ENCODE measurements at regions of chr19 and their contacts with region 1.

Region 1: GRCh38 chr19:56660381-56661107 is 11.0 kb downstream of the ZNF835 start:
- DNase-seq: no peak
- ATAC-seq: no peak
- H3K4me3 ChIP-seq: no peak overlapping the region
- H3K4me3 Mint-ChIP-seq: no peak overlapping the region
- H3K27ac ChIP-seq: no peak overlapping the region
- H3K27ac Mint-ChIP-seq: no peak overlapping the region
- H3K4me1 ChIP-seq: no peaks in the 10 kb centered on the region
- H3K4me1 Mint-ChIP-seq: no peaks in the 10 kb centered on the region
- H3K27me3 ChIP-seq: no peaks in the 10 kb centered on the region
- H3K27me3 Mint-ChIP-seq: no peaks in the 10 kb centered on the region
- CTCF ChIP-seq: no peak

Region 2: GRCh38 chr19:56547535-56547934 is 113.0 kb before region 1 on chr19:
- CTCF ChIA-PET with region 1: no interaction called
- POLR2A ChIA-PET with region 1: no interaction called
- intact Hi-C with region 1: loop called in 1 of 2 experiments (anchors 5 kb)
- DNase-seq: no peak
- ATAC-seq: no peak
- H3K4me3 ChIP-seq: no peak overlapping the region
- H3K4me3 Mint-ChIP-seq: no peak overlapping the region
- H3K27ac ChIP-seq: no peak overlapping the region
- H3K27ac Mint-ChIP-seq: no peak overlapping the region
- H3K4me1 ChIP-seq: no peaks in the 10 kb centered on the region
- H3K4me1 Mint-ChIP-seq: no peaks in the 10 kb centered on the region
- H3K27me3 ChIP-seq: no peaks in the 10 kb centered on the region
- H3K27me3 Mint-ChIP-seq: no peaks in the 10 kb centered on the region
- CTCF ChIP-seq: no peak

Measured in CD4-positive, alpha-beta T cell (primary cell).